Naive thymus-derived CD8-positive, alpha-beta T cell (primary cell): ENCODE measurements at regions of chr4 and their contacts with region 1.

Region 1: GRCh38 chr4:98928505-98929340 is at the start of gene EIF4E:
- DNase-seq: peak; percentile 85 to 100 (median 97)
- ATAC-seq: peak; percentile 82 to 86
- H3K4me3 Mint-ChIP-seq: peak within 1 kb of the TSS; percentile 91 to 100 (median 98)
- H3K27ac Mint-ChIP-seq: peak within 1 kb of the TSS; percentile 92 to 99 (median 96)
- H3K4me1 Mint-ChIP-seq: peaks cover 8 to 53% (median 34%) of the 10 kb centered on the region in 4 donors
- H3K27me3 Mint-ChIP-seq: peaks cover 0 to 7% (median 0%) of the 10 kb centered on the region in 5 donors
- polyA plus RNA-seq, gene EIF4E: 51.5 to 68.3 (median 62.7) TPM

Region 2: GRCh38 chr4:98658287-98659105 is 270.2 kb before region 1 on chr4 and contains the start of gene TSPAN5:
- POLR2A ChIA-PET with region 1: interaction called, 11 read pairs
- DNase-seq: peak; percentile 58 to 80 (median 73)
- ATAC-seq: peak; percentile 60 to 73
- H3K4me3 Mint-ChIP-seq: peak within 1 kb of the TSS; percentile 87 to 99 (median 92)
- H3K27ac Mint-ChIP-seq: peak within 1 kb of the TSS; percentile 18 to 99 (median 84)
- H3K4me1 Mint-ChIP-seq: peaks cover 38 to 86% (median 80%) of the 10 kb centered on the region in 4 donors
- H3K27me3 Mint-ChIP-seq: no peaks in the 10 kb centered on the region
- polyA plus RNA-seq, gene TSPAN5: 5.9 to 13.9 (median 9.6) TPM